ENCODE measurements at regions of chr3 and their contacts with region 1.

Region 1: GRCh38 chr3:8982509-8982908 is 19.2 kb upstream of the RAD18 start:
- DNase-seq: no peak
- H3K4me3 ChIP-seq: no peak overlapping the region
- H3K27ac ChIP-seq: no peak overlapping the region
- H3K4me1 ChIP-seq: no peaks in the 10 kb centered on the region; a peak in 1 of 7 replicates
- H3K27me3 ChIP-seq: no peaks in the 10 kb centered on the region
- CTCF ChIP-seq: no peak
- EP300 ChIP-seq: no peak
- POLR2A ChIP-seq: no peak
- RAD21 ChIP-seq: no peak

Region 2: DNA sequence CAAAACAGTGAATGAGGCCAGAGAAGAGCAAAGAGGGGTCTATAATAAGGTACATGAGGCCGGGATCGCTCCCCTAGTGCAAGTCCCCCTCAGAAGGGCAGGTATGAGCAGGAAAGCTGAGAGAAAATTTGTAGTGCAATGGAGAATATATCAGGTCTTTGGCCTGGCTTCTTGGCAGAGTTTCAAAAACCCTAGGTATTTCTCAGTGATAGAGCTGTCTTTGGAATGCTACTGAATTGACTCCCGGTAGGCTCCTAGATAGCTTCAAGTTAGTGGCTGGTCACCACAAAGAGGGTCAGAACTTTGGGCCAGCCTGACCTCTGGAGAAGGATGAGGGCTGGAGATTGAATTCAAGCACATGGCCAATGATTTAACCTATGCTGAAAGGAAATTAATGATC is 182.5 kb before region 1 on chr3:
- CTCF ChIA-PET with region 1: no interaction called
- POLR2A ChIA-PET with region 1: no interaction called
- DNase-seq: no peak
- H3K4me3 ChIP-seq: no peak overlapping the region
- H3K27ac ChIP-seq: no peak overlapping the region
- H3K4me1 ChIP-seq: no peaks in the 10 kb centered on the region
- H3K27me3 ChIP-seq: no peaks in the 10 kb centered on the region; a peak in 1 of 7 replicates
- CTCF ChIP-seq: no peak
- EP300 ChIP-seq: no peak
- POLR2A ChIP-seq: no peak
- RAD21 ChIP-seq: no peak

Region 3: GRCh38 chr3:8882171-8882593 is 100.3 kb before region 1 on chr3:
- CTCF ChIA-PET with region 1: no interaction called
- POLR2A ChIA-PET with region 1: no interaction called
- DNase-seq: no peak
- H3K4me3 ChIP-seq: no peak overlapping the region
- H3K27ac ChIP-seq: peak overlapping the region; percentile 32; the same call in 1 of the 2 replicates
- H3K4me1 ChIP-seq: peaks cover 0 to 8% (median 4%) of the 10 kb centered on the region in 4 experiments; a peak in 5 of 7 replicates
- H3K27me3 ChIP-seq: no peaks in the 10 kb centered on the region
- CTCF ChIP-seq: no peak
- EP300 ChIP-seq: no peak
- POLR2A ChIP-seq: no peak
- RAD21 ChIP-seq: no peak

Region 4: GRCh38 chr3:8945890-8946600 is 36.5 kb before region 1 on chr3:
- CTCF ChIA-PET with region 1: no interaction called
- POLR2A ChIA-PET with region 1: no interaction called
- DNase-seq: no peak
- H3K4me3 ChIP-seq: no peak overlapping the region
- H3K27ac ChIP-seq: no peak overlapping the region
- H3K4me1 ChIP-seq: no peaks in the 10 kb centered on the region
- H3K27me3 ChIP-seq: peaks cover 0 to 1% (median 0%) of the 10 kb centered on the region in 4 experiments; a peak in 1 of 7 replicates
- CTCF ChIP-seq: no peak
- EP300 ChIP-seq: no peak
- POLR2A ChIP-seq: no peak
- RAD21 ChIP-seq: no peak

Region 5: DNA sequence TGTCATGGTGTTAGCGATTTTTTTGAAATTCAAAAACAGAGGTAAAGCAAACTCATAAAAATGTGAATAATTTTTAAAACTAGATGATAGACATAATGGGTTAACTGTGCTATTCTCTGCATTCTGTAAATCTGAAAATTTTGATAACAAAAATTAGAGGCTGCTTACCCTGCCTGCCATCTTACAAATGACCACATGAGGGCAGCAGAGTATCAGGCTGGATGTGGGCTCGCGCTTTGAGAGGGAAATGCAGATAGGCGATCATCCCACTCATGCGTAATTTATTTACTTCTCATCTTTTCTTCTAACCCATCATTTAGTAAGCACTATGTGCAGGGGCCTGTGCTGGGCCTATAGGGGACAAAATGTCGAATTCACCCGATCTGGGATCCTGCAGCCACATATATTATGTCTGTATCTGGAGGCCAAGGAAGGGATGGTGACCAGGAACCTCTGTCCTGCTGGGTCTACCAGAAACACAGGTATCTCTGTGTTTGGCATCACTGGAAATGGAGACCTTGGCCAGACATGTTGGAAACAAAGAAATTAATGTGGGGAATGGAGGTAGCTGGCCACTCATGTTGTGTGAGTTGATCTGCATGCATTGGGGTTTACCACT is 11.4 kb before region 1 on chr3:
- CTCF ChIA-PET with region 1: interaction called, 176 read pairs
- POLR2A ChIA-PET with region 1: interaction called, 4 read pairs
- DNase-seq: peak in 1 of 2 experiments; percentile 83
- H3K4me3 ChIP-seq: no peak overlapping the region
- H3K27ac ChIP-seq: no peak overlapping the region
- H3K4me1 ChIP-seq: peaks cover 0 to 6% (median 3%) of the 10 kb centered on the region in 4 experiments; a peak in 4 of 7 replicates
- H3K27me3 ChIP-seq: peaks cover 0 to 2% (median 0%) of the 10 kb centered on the region in 4 experiments; a peak in 1 of 7 replicates
- CTCF ChIP-seq: peak; percentile 72 to 87 (median 83)
- EP300 ChIP-seq: no peak
- POLR2A ChIP-seq: no peak
- RAD21 ChIP-seq: peak; percentile 98